ENCODE measurements at regions of chr2 and their contacts with region 1.

Region 1: DNA sequence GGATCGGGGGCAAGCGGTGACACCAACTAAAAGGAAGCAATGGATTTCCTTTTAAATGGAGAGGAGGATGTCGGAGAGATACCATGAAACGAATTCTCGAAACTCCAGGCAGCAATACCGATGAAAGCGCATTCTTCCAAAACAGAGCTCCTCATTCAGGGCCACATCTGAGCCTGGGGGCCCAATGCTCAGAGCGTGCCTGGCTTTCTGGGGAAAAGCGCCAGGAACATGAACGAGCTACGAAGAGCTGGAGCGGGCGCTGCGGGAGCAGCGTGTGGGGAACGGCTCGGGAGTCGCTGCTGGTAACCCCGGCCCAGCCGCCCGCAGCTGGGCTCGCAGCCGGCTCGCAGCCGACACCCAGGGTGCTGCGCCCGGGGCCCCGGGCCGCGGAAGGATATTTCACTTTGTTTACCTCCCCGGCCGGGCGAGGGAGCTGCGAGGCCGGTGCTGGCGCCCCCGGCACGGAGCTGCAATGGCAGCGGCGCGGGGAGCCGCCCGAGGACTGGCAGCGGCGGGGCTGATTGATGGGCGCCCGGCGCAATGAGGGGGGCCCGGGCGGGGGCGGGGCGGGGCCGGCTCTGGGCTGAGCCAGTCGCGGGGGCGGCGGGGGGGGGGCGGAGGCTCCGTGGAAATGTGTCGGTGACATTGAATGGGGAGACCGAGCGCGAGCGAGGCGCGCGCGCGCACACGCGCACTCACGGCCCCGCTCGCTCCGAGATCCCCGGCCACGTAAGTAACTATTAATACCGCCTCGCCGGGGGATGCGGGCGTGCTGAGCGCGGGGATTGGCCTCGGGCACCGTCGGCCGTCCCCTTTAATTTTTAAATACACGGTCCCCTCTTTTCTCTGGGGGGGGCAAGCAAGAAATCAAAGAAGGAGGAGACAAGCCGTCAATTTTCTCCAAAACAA is at the start of gene TRIB2:
- DNase-seq: peak; percentile 89
- H3K4me3 Mint-ChIP-seq: peak within 1 kb of the TSS; percentile 86
- H3K27ac Mint-ChIP-seq: peak within 1 kb of the TSS; percentile 86
- H3K4me1 Mint-ChIP-seq: peaks cover 44% of the 10 kb centered on the region
- H3K27me3 Mint-ChIP-seq: no peaks in the 10 kb centered on the region
- total RNA-seq, gene TRIB2: 4.9 to 5.3 TPM

Region 2: GRCh38 chr2:11829947-11830707 is 886.4 kb before region 1 on chr2:
- CTCF ChIA-PET with region 1: interaction called, 15 read pairs
- POLR2A ChIA-PET with region 1: no interaction called
- intact Hi-C with region 1: loop called (anchors 1 kb)
- DNase-seq: peak; percentile 74
- H3K4me3 Mint-ChIP-seq: peak overlapping the region; percentile 49
- H3K27ac Mint-ChIP-seq: peak overlapping the region; percentile 72
- H3K4me1 Mint-ChIP-seq: peaks cover 41% of the 10 kb centered on the region
- H3K27me3 Mint-ChIP-seq: peaks cover 32% of the 10 kb centered on the region

Region 3: GRCh38 chr2:12169721-12170120 is 546.8 kb before region 1 on chr2:
- CTCF ChIA-PET with region 1: no interaction called
- POLR2A ChIA-PET with region 1: no interaction called
- intact Hi-C with region 1: loop called (anchors 5 kb)
- DNase-seq: peak; percentile 61
- H3K4me3 Mint-ChIP-seq: no peak overlapping the region
- H3K27ac Mint-ChIP-seq: no peak overlapping the region
- H3K4me1 Mint-ChIP-seq: peaks cover 33% of the 10 kb centered on the region
- H3K27me3 Mint-ChIP-seq: no peaks in the 10 kb centered on the region

Region 4: DNA sequence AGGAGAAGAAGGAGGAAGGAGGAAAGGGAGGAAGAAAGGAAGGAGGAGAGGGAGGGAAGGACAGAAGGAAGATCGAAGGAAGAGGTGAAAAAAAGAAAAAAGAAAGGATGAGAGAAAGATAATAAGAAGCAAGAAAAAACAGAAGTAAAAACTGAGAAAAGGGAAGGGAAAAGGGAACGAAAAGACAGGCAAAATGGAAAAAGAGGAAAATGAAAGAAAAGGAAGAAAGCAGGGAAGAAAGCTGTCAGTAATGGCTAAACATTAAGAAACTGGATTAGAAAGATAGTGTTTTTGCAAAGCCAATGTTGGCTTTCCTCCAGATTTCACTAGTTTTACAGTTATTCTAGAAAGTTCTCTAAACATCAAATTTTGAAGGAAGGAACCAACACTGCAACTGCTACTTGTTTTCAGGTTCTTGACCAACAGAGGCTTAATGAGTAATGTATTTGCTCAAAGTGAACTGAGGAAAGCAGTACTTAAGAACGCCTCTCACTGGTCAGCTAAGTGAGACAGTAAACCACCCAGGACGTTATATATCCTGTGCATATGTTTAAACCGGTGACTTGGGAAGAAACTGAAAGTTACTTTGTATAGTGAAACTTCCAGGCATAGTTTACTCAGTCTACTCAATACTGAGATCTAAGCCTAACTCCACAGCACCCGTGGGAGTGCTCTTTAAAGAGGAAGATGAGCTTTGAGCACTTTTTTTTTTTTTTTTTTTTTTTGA is 286.0 kb before region 1 on chr2:
- CTCF ChIA-PET with region 1: interaction called, 6 read pairs
- POLR2A ChIA-PET with region 1: interaction called, 3 read pairs
- intact Hi-C with region 1: loop called (anchors 2 kb)
- DNase-seq: peak; percentile 53
- H3K4me3 Mint-ChIP-seq: peak overlapping the region; percentile 33
- H3K27ac Mint-ChIP-seq: peak overlapping the region; percentile 74
- H3K4me1 Mint-ChIP-seq: peaks cover 14% of the 10 kb centered on the region
- H3K27me3 Mint-ChIP-seq: no peaks in the 10 kb centered on the region

Region 5: GRCh38 chr2:12507295-12507694 is 209.2 kb before region 1 on chr2:
- CTCF ChIA-PET with region 1: interaction called, 12 read pairs
- POLR2A ChIA-PET with region 1: no interaction called
- intact Hi-C with region 1: loop called (anchors 1 kb)
- DNase-seq: peak; percentile 88
- H3K4me3 Mint-ChIP-seq: peak overlapping the region; percentile 27
- H3K27ac Mint-ChIP-seq: peak overlapping the region; percentile 33
- H3K4me1 Mint-ChIP-seq: peaks cover 77% of the 10 kb centered on the region
- H3K27me3 Mint-ChIP-seq: no peaks in the 10 kb centered on the region

Region 6: GRCh38 chr2:12819103-12819475 is 102.6 kb after region 1 on chr2:
- CTCF ChIA-PET with region 1: no interaction called
- POLR2A ChIA-PET with region 1: no interaction called
- intact Hi-C with region 1: loop called (anchors 5 kb)
- DNase-seq: no peak
- H3K4me3 Mint-ChIP-seq: no peak overlapping the region
- H3K27ac Mint-ChIP-seq: no peak overlapping the region
- H3K4me1 Mint-ChIP-seq: peaks cover 54% of the 10 kb centered on the region
- H3K27me3 Mint-ChIP-seq: no peaks in the 10 kb centered on the region

Region 7: DNA sequence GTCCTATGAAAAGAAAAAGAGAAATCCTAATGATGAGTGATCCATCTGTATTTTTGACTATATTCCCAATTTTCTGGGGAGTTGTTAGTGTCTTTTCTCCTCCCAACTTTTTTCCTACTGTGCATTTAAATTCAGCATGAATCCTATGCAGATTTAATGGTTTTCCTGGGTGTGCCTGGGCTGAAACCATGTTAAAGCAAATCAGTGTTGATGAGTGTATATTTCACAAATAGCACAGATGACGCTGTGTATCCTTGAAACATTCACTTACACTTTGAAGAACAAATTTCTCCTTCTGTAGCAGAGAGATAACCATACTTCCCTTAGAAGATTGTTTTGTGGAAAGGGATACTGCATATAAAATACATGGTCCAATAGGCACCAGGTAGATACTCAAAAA is 114.5 kb after region 1 on chr2:
- CTCF ChIA-PET with region 1: no interaction called
- POLR2A ChIA-PET with region 1: no interaction called
- intact Hi-C with region 1: no loop called
- DNase-seq: no peak
- H3K4me3 Mint-ChIP-seq: no peak overlapping the region
- H3K27ac Mint-ChIP-seq: no peak overlapping the region
- H3K4me1 Mint-ChIP-seq: no peaks in the 10 kb centered on the region
- H3K27me3 Mint-ChIP-seq: peaks cover under 1% of the 10 kb centered on the region

Measured in activated CD4-positive, alpha-beta memory T cell treated with anti-CD3 and anti-CD28 coated beads for 36 hours (primary cell).